ENCODE measurements at regions of chr4 and their contacts with region 1.

Region 1: DNA sequence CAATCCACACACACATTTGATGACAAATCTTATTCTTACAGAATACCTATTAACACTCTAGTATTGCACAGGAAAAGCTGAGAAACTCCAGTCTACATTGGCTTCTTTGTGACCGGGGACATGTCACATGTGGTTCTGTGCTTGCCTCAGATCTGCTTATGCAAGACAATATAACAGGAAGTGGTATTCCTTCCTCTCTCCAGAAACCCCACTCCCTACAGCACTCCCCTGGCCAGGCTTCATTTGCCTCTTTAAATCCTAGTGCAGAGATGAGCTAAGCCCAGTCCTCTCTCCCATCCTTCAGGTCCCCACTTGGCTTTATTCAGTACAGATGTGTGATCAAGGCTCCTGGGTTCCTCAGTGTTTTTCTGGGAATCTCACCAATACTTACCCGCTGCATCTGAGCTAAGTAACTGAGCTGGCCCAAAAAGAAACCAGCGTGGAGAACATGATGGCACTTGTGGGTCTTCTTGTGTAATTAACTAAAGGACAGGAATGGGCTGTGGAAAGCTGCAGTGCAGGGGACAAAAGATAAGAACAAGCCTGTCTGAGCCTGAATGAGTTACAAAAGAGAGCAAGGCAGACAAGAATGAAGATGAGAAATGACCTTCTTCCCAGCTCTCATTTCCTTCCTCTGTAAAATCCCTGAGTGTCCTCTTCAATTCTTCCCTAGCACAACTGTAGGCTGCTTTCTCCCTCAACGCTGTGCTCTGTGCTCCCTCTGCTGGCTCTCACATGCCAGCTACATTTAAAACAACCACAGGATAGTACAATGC is 105.6 kb downstream of the HNRNPD start:
- DNase-seq: peak in 1 of 2 experiments; percentile 51
- H3K4me3 ChIP-seq: no peak overlapping the region
- H3K27ac ChIP-seq: no peak overlapping the region
- H3K4me1 ChIP-seq: peaks cover 0 to 6% (median 1%) of the 10 kb centered on the region in 4 experiments; a peak in 3 of 7 replicates
- H3K27me3 ChIP-seq: no peaks in the 10 kb centered on the region
- CTCF ChIP-seq: peak; percentile 69 to 94 (median 83)
- EP300 ChIP-seq: no peak
- POLR2A ChIP-seq: no peak
- RAD21 ChIP-seq: peak; percentile 96 to 97

Region 2: DNA sequence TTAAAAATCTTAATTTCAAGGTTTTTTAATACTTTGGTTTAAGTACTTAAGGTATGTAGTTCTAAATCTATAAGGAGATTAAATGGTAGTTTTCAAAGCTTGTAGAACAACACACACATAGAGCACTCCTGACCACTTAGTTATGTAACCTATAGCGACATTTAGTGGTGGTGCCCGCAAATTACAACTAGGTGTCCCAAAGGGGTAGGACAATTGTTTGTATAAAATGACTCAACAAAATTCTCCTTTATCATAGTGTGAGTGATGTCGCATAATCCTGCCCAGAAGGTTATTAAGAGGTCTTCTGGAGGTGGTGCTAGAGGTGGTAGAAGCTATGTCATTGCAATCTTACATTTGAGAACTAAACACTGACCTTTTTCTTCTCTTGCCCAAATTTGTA is 423.5 kb before region 1 on chr4:
- CTCF ChIA-PET with region 1: interaction called, 11 read pairs
- POLR2A ChIA-PET with region 1: no interaction called
- DNase-seq: peak; percentile 9 to 80
- H3K4me3 ChIP-seq: no peak overlapping the region
- H3K27ac ChIP-seq: no peak overlapping the region
- H3K4me1 ChIP-seq: no peaks in the 10 kb centered on the region
- H3K27me3 ChIP-seq: peaks cover 0 to 1% (median 0%) of the 10 kb centered on the region in 4 experiments; a peak in 1 of 7 replicates
- CTCF ChIP-seq: peak in 2 of 3 experiments; percentile 64 to 77; a peak in 3 of 4 replicates
- EP300 ChIP-seq: no peak
- POLR2A ChIP-seq: no peak
- RAD21 ChIP-seq: peak; percentile 86 to 88

Region 3: DNA sequence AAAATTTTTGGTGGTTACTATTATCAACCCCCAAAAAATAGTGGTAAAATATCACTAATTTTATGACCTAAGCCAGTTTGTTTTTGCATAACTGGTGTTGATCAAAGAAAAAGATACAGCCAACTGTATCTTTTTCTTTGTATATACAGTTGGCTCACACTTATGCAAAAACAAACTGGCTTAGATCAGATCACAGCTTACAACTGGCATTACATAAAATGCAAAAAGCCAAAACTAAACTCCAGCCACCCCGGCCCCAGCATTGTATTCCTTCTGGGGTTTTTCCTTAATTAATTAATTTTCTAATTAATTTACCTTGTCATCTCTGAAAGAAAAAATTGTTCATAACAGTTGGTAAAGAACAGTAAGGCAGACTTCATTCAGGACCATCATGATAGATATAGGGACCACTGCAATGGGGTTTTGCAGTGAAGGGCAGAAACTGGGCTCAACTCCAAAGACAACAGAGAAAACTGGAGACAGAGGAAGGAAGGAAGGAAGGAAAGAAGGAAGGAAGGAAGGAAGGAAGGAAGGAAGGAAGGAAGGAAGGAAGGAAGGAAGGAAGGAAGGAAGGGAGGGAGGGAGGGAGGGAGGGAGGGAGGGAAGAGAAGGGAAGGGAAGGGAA is 96.6 kb before region 1 on chr4:
- CTCF ChIA-PET with region 1: no interaction called
- POLR2A ChIA-PET with region 1: no interaction called
- DNase-seq: no peak
- H3K4me3 ChIP-seq: no peak overlapping the region
- H3K27ac ChIP-seq: no peak overlapping the region
- H3K4me1 ChIP-seq: no peaks in the 10 kb centered on the region
- H3K27me3 ChIP-seq: no peaks in the 10 kb centered on the region
- CTCF ChIP-seq: no peak
- EP300 ChIP-seq: no peak
- POLR2A ChIP-seq: no peak
- RAD21 ChIP-seq: no peak

Region 4: DNA sequence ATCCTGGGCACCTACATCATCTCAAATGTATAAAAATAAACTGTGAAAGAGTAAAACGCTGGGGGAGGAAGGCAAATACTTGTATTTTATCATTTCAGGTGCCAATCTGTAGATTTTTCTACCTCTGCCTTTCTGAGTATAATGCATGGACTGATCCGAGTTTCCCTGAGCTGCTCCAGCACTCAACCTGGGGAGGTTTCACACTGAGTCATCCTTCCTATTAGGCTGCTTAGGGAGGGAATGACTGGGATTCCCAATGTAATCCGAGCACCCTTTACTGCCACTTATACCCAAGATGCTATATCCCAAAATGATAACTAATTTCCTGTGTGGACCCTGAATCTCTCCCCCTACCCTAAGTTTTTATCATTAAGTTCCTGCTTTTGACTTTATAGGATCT is 21.1 kb before region 1 on chr4:
- CTCF ChIA-PET with region 1: interaction called, 11 read pairs
- POLR2A ChIA-PET with region 1: no interaction called
- DNase-seq: no peak
- H3K4me3 ChIP-seq: no peak overlapping the region
- H3K27ac ChIP-seq: no peak overlapping the region
- H3K4me1 ChIP-seq: no peaks in the 10 kb centered on the region
- H3K27me3 ChIP-seq: no peaks in the 10 kb centered on the region
- CTCF ChIP-seq: no peak
- EP300 ChIP-seq: no peak
- POLR2A ChIP-seq: no peak
- RAD21 ChIP-seq: no peak

Region 5: DNA sequence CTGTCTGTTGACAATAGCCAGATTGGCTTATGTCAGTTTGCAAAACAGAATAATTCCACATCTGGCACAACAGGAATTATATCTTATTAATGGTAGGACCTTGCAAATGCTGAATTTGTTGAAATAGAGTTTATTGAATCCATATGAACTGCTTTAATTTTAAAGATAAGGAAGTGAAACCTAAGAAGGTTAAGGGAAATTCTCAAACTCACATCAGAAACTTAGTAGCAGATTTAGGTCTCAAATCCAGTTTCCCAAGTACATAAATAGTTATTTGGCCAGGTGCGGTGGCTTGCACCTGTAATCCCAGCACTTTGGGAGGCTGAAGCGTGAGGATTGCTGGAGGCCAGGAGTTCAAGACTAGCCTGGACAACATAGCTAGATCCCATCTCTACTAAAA is 11.5 kb before region 1 on chr4:
- CTCF ChIA-PET with region 1: interaction called, 15 read pairs
- POLR2A ChIA-PET with region 1: interaction called, 4 read pairs
- DNase-seq: no peak
- H3K4me3 ChIP-seq: no peak overlapping the region
- H3K27ac ChIP-seq: no peak overlapping the region
- H3K4me1 ChIP-seq: no peaks in the 10 kb centered on the region
- H3K27me3 ChIP-seq: no peaks in the 10 kb centered on the region
- CTCF ChIP-seq: no peak
- EP300 ChIP-seq: no peak
- POLR2A ChIP-seq: no peak
- RAD21 ChIP-seq: no peak

Region 6: GRCh38 chr4:82282875-82283274 is 14.6 kb after region 1 on chr4:
- CTCF ChIA-PET with region 1: interaction called, 26 read pairs
- POLR2A ChIA-PET with region 1: no interaction called
- DNase-seq: no peak
- H3K4me3 ChIP-seq: no peak overlapping the region
- H3K27ac ChIP-seq: no peak overlapping the region
- H3K4me1 ChIP-seq: peaks cover 0 to 4% (median 2%) of the 10 kb centered on the region in 4 experiments; a peak in 5 of 7 replicates
- H3K27me3 ChIP-seq: no peaks in the 10 kb centered on the region
- CTCF ChIP-seq: no peak
- EP300 ChIP-seq: no peak
- POLR2A ChIP-seq: no peak
- RAD21 ChIP-seq: no peak

Measured in H1 (cell line).